HEK293 (cell line): ENCODE measurements at regions of chr6 and their contacts with region 1.

Region 1: GRCh38 chr6:44338228-44339122 is 4.0 kb upstream of the SPATS1 start:
- H3K4me3 ChIP-seq: no peak overlapping the region
- H3K27ac ChIP-seq: no peak overlapping the region
- H3K4me1 ChIP-seq: no peaks in the 10 kb centered on the region; the same call in 1 of the 2 replicates
- CTCF ChIP-seq: peak; percentile 78

Region 2: DNA sequence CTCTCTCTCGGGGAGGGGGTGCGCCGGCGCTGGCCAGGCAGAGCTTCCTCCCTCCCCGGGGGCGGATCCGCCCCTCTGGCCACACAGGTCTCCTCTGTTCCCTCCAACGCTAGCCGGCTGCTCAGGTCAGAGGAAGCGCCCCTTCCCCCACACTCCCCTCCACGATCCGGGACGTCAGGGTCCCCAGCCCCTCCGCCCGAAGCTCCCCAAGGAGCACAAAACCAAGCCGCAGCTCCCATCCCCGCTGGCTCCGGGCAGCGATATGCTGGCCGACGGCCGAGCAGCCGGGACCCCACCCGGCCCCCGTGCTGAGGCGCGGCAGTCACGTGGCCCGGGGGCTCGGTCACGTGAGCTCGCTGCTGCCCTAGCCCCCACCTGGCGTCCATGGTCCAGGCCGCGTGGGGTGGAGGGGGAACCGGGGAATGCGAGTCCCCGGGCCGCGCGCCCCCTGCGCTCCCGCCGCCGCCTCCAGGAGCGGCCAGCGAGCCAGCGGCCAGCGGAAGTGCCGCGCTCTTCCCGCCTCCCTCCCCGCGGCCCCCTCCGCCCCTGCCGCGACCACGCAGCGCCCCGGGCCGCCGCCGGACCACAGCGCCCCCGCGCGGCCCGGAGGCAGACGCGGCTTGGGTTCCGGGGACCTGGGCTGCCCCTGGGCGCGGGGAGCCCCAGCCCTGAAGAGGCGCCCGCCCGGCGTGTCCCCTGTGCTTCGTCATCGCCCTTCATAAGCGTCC is 81.3 kb before region 1 on chr6 and contains the start of gene SLC35B2:
- CTCF ChIA-PET with region 1: interaction called, 14 read pairs
- POLR2A ChIA-PET with region 1: no interaction called
- H3K4me3 ChIP-seq: peak within 1 kb of the TSS; percentile 82
- H3K27ac ChIP-seq: peak within 1 kb of the TSS; percentile 65; the same call in 1 of the 2 replicates
- H3K4me1 ChIP-seq: no peaks in the 10 kb centered on the region
- CTCF ChIP-seq: 0 out of 2 replicates have a peak, but pooled peaks have one; percentile 32

Region 3: DNA sequence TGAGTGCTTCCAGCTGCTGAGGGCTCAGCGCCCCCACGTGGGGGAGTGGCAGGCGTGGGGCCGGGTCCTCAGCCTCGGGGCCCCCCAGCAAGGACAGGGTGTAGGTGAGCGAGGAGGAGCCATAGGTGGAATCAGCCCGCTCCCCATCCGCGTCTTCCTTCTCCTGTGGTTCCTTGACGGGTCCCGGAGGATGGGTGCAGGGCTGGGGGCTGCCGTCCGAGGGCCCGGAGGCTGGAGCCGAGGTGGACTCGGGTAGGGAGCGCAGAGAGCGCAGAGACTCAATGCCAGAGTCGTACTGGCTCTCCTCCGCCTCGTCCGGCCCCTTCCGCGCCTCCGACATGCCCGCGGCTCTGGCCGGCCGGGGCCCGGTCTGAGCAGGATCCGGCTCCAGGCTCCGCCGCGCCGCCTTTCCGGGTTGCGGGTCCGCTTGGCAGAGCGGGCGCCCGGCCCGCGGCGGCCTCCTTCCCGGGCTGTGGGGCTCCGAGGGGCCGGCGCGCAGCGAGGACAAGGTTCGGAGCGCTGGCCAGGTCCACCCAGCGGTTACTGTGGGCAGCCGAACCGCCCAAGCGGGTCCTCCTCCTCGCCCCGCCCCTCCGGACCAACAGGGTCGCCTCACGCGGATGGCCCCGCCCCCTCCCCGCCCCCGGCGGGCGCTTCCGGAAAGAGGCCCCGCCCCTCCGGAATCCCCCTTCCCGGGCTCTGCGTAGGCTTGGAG is 73.3 kb before region 1 on chr6 and contains the start of gene NFKBIE:
- CTCF ChIA-PET with region 1: interaction called, 208 read pairs
- POLR2A ChIA-PET with region 1: interaction called, 7 read pairs
- H3K4me3 ChIP-seq: peak within 1 kb of the TSS; percentile 62
- H3K27ac ChIP-seq: peak within 1 kb of the TSS; percentile 76; the same call in 1 of the 2 replicates
- H3K4me1 ChIP-seq: peaks cover 4% of the 10 kb centered on the region; the same call in 1 of the 2 replicates
- CTCF ChIP-seq: peak; percentile 98

Region 4: GRCh38 chr6:44304282-44305199 is 33.9 kb before region 1 on chr6:
- CTCF ChIA-PET with region 1: interaction called, 30 read pairs
- POLR2A ChIA-PET with region 1: no interaction called
- H3K4me3 ChIP-seq: no peak overlapping the region
- H3K27ac ChIP-seq: no peak overlapping the region
- H3K4me1 ChIP-seq: no peaks in the 10 kb centered on the region
- CTCF ChIP-seq: peak; percentile 73

Region 5: DNA sequence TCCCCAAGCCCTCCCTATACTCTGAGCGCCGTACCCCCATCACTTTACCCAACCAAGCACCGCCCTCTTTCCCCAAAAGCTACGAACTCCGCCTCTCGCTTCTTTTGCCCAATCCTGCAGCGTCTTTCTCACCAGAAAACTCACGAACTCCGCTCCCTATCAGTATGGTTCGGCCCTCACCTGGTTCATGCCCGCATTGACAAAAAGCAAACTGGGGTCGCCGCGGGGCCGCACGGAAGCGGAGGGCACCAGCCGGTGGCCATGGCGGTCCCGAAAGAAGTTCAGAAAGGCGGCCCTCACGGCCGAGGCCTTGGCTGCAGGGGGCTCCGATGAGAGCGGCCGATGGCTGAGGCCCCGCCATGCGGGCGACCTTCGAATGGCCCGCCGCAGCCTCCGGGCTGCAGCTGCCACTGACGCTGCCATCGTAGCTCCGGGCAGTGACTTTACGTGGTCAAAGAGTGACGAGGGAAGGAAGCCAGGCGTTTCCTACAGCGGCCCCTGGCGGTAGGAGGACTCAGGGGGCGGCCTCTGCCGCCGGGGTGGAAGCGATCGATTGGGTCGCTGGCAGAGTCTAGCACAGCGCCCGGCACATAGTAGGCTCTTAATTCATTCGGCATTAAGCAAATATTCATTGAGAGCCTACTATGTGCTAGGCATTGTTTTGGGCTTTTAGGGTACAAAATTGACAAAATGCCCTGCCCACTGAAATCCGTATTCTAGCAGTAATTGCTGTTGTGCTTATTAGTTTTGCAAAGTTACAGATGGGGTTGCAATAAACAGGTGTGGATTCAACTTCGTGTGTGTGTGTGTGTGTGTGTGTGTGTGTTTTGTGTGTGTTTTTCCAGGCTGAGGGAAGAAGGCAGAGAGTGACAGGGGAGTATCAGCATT is 25.3 kb before region 1 on chr6 and contains the start of gene AARS2:
- CTCF ChIA-PET with region 1: interaction called, 24 read pairs
- POLR2A ChIA-PET with region 1: no interaction called
- H3K4me3 ChIP-seq: peak within 1 kb of the TSS; percentile 69
- H3K27ac ChIP-seq: peak within 1 kb of the TSS; percentile 71; the same call in 1 of the 2 replicates
- H3K4me1 ChIP-seq: peaks cover 5% of the 10 kb centered on the region; the same call in 1 of the 2 replicates
- CTCF ChIP-seq: peak; percentile 98

Region 6: DNA sequence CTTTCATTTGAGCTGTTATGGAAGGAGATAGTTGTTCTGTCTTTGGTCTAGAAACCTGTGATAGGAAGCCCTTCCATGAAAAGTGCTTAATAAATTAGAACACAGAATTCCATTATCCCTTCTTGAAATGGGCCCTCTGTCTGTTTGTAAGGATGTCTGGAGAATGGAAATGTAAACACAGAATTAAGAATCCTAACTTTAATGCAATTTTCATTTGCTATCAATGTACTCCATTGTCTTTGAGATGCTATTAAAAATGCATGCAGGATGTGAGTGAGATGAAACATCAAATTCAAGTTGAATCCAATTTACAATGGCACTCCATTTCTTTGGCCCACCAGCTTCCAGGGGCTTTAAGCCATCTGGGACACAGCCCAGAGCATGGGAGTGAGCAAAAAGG is 11.4 kb before region 1 on chr6:
- CTCF ChIA-PET with region 1: interaction called, 25 read pairs
- POLR2A ChIA-PET with region 1: no interaction called
- H3K4me3 ChIP-seq: no peak overlapping the region
- H3K27ac ChIP-seq: no peak overlapping the region
- H3K4me1 ChIP-seq: no peaks in the 10 kb centered on the region
- CTCF ChIP-seq: no peak

Region 7: GRCh38 chr6:44353336-44353735 is 14.9 kb after region 1 on chr6:
- CTCF ChIA-PET with region 1: interaction called, 20 read pairs
- POLR2A ChIA-PET with region 1: interaction called, 5 read pairs
- H3K4me3 ChIP-seq: no peak overlapping the region
- H3K27ac ChIP-seq: no peak overlapping the region
- H3K4me1 ChIP-seq: peaks cover 3% of the 10 kb centered on the region; the same call in 1 of the 2 replicates
- CTCF ChIP-seq: no peak